Sciatic nerve (tissue), 2 donors: ENCODE measurements at regions of chr11 and their contacts with region 1.

Region 1: DNA sequence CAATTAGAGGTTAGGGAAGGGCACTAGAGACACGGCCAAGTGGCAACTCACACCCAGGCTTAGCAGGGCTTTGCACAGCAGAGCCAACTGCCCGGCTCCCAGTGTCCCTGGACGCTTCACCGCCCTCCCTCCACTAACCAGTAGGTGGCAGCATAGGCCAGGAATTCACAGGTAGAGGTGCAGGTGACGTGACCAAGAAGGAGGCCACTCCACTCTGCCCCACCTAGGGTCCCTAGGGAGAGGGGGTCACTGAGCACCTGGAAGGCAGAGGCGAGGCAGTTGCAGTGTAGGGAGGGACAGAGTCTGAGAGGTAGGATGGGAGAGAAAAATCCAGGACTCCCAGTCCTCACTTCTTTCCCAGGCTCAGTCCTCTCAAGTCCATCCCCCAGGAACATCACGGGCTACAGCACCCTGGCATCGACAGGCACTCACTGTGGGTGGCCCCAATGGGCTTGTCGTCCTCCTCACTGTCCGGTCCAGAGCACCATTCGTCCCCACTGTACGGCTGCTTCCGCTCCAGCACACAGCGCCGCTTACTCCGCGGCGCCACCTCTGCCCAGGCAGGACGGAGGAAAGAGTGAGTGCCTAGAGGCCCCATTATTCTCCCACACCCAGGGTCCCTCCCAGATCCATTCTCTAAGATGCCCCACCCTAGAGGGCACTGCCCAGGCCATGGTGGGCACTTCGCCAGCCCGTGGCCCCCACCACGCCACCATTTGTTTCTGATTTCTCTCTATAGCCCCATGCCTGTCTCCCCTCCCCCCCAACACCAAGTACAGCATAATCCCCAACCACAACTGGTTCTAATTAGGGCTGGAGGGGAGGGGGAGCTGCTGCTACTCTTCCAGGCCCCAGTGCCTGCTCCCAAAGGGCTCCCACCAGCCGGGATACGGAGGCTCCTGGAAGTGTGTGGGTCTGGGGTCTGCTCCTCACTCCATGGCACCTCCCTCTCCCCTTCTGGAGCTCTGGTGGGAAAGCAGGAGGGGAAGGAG is 18.4 kb downstream of the BCL9L start:
- DNase-seq: peak; percentile 91
- ATAC-seq: peak; percentile 54

Region 2: GRCh38 chr11:118448294-118448693 is 459.1 kb before region 1 on chr11:
- intact Hi-C with region 1: no loop called
- DNase-seq: no peak
- ATAC-seq: no peak

Region 3: GRCh38 chr11:118705111-118705741 is 202.1 kb before region 1 on chr11:
- intact Hi-C with region 1: loop called (anchors 10 kb)
- DNase-seq: no peak
- ATAC-seq: peak; percentile 65

Region 4: DNA sequence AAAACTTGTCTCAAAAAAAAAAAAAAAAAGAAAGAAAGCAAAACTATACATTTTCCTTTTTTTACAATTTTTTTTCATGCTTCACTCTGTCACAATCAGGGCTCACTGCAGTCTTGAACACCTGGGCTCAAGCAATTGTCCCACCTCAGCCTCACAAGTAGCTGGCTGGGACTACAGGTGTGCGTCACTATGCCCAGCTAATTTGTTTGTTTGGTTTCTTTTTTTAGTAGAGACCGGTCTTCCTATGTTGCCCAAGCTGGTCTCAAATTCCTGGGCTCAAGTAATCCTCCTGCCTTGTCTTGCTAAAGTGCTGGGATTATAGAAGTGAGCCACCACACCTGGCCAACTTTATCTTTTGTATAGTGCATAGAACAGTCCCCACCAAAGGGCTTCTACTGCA is 38.7 kb before region 1 on chr11:
- intact Hi-C with region 1: no loop called
- DNase-seq: no peak
- ATAC-seq: no peak

Region 5: GRCh38 chr11:118928108-118928870 is 20.9 kb after region 1 on chr11:
- intact Hi-C with region 1: loop called (anchors 1 kb)
- DNase-seq: peak; percentile 95
- ATAC-seq: peak; percentile 86

Region 6: DNA sequence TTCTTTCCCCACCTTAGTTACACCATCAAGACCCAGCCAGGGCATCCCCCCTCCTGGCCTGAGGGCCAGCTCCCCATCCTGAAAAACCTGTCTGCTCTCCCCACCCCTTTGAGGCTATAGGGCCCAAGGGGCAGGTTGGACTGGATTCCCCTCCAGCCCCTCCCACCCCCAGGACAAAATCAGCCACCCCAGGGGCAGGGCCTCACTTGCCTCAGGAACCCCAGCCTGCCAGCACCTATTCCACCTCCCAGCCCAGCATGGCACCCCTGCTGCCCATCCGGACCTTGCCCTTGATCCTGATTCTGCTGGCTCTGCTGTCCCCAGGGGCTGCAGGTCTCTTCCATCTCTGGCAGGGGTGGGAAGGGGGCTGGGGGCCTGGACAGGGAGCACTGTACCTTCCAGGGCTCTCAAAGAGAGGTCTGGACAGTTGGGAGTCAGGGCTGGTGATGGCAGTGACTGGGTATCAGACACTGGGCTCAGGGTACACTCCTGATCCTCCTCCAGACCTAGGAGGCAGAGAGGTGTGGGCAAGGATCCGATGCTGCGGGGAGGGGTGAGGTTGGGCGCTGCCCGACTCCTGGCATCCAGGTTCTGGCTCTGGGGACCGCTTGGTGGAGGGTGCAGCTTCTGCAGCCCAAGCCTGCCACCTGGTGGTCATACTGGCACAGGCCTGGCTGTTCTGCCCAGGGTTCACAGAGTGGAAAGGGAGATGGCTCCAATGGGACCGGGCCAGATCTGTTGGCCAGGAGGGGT is 48.9 kb after region 1 on chr11 and contains the start of gene UPK2:
- intact Hi-C with region 1: loop called (anchors 2 kb)
- DNase-seq: peak; percentile 94
- ATAC-seq: peak; percentile 96
- total RNA-seq, gene UPK2: not detected